Naive thymus-derived CD4-positive, alpha-beta T cell (primary cell): ENCODE measurements at regions of chr7 and their contacts with region 1.

Region 1: DNA sequence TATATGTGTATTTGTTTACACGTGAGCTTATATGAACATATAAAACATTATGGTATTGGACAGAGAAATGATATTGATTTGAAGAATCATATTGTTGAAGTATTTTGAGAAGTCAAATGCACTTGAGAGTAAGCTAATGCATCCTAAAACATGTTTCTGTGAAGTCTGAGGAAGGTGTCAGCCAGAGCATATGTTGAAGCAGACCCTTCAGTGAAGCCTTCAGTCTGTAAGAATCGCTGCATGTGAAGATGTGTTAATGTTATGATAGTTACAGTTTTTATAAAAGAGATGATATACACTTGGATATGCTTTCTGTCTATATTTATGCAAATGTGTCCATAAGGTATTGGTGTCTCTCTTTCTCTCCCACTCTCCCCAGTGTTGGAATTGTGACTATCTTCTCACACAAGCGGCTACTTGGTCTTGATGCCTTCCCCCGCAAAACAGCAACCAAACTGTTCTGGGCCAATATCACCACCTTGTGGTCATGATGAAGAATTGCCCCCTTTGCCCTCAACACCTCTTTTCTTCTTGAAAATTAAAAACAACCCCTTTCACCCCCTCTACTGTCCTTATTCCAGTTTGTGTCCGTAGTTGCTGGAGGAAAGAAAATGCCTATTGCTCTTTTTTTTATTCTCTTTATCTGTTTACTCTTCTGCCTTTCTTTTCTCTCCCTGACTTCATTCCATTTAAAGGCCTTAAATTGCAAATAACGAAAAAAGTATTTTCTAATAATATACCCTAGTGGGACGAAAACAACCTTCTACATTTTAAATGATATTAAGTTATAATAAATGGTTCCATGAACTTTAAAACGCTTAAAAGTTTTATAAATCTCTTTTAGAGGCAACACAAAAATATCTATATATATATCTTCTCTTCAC is 64.9 kb downstream of the IKZF1 start:
- DNase-seq: peak in 7 of 9 donors; percentile 72 to 86 (median 81)
- ATAC-seq: peak; percentile 84
- H3K4me3 ChIP-seq: peak overlapping the region; percentile 15
- H3K4me3 Mint-ChIP-seq: peak overlapping the region; percentile 8 to 89 (median 60)
- H3K27ac ChIP-seq: peak overlapping the region; percentile 94
- H3K27ac Mint-ChIP-seq: peak overlapping the region in 6 of 9 donors; percentile 80 to 100 (median 98)
- H3K4me1 ChIP-seq: peaks cover 84 to 96% of the 10 kb centered on the region in 2 donors
- H3K4me1 Mint-ChIP-seq: peaks cover 63 to 99% (median 96%) of the 10 kb centered on the region in 7 donors
- H3K27me3 ChIP-seq: no peaks in the 10 kb centered on the region
- H3K27me3 Mint-ChIP-seq: no peaks in the 10 kb centered on the region

Region 2: DNA sequence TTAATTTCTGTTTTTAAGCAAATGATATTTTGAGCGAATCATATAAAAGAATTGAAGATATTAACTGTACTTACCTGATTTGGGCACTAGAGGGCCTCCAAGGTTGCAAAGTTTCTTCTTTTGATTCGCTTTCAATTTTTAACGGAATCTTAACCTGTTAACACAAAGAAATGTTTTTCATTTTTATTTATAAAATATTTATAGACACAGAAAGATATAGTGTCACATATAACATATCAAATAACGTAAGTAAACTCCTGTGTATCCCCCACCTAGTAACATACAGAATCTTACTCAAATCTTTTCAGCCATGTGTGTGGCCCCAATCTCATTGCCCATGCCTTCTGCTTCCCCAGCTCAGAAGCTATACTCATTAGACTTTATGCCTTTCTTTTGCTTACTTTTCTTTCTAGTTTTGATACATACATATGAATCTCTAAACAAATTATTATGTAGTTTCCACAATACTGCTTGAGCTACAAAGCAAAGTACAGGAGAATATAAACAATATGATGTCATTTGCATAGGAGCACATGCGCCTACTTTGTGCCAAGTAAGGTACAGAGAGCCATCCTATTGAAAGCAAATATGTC is 226.9 kb before region 1 on chr7:
- CTCF ChIA-PET with region 1: interaction called, 11 read pairs
- POLR2A ChIA-PET with region 1: interaction called, 7 read pairs
- intact Hi-C with region 1: loop called (anchors 1 kb)
- DNase-seq: peak in 7 of 9 donors; percentile 43 to 72 (median 62)
- ATAC-seq: peak; percentile 83
- H3K4me3 ChIP-seq: no peak overlapping the region
- H3K4me3 Mint-ChIP-seq: peak overlapping the region in 9 of 10 donors; percentile 13 to 86 (median 64)
- H3K27ac ChIP-seq: peak overlapping the region; percentile 55
- H3K27ac Mint-ChIP-seq: peak overlapping the region in 8 of 9 donors; percentile 16 to 91 (median 62)
- H3K4me1 ChIP-seq: peaks cover 3% of the 10 kb centered on the region in 2 donors
- H3K4me1 Mint-ChIP-seq: peaks cover 0 to 37% (median 12%) of the 10 kb centered on the region in 7 donors
- H3K27me3 ChIP-seq: no peaks in the 10 kb centered on the region
- H3K27me3 Mint-ChIP-seq: peaks cover 0 to 18% (median 0%) of the 10 kb centered on the region in 5 donors

Region 3: GRCh38 chr7:50190776-50191175 is 178.6 kb before region 1 on chr7:
- CTCF ChIA-PET with region 1: no interaction called
- POLR2A ChIA-PET with region 1: no interaction called
- intact Hi-C with region 1: no loop called
- DNase-seq: no peak
- ATAC-seq: no peak
- H3K4me3 ChIP-seq: no peak overlapping the region
- H3K4me3 Mint-ChIP-seq: no peak overlapping the region
- H3K27ac ChIP-seq: no peak overlapping the region
- H3K27ac Mint-ChIP-seq: no peak overlapping the region
- H3K4me1 ChIP-seq: no peaks in the 10 kb centered on the region
- H3K4me1 Mint-ChIP-seq: peaks cover 0 to 8% (median 0%) of the 10 kb centered on the region in 7 donors
- H3K27me3 ChIP-seq: no peaks in the 10 kb centered on the region
- H3K27me3 Mint-ChIP-seq: peaks cover 0 to 57% (median 0%) of the 10 kb centered on the region in 5 donors

Region 4: GRCh38 chr7:50266635-50267386 is 102.6 kb before region 1 on chr7:
- CTCF ChIA-PET with region 1: interaction called, 12 read pairs
- POLR2A ChIA-PET with region 1: interaction called, 25 read pairs
- intact Hi-C with region 1: loop called in 1 of 2 experiments (anchors 1 kb)
- DNase-seq: peak in 8 of 9 donors; percentile 79 to 86 (median 82)
- ATAC-seq: peak; percentile 87
- H3K4me3 ChIP-seq: peak overlapping the region; percentile 14
- H3K4me3 Mint-ChIP-seq: peak overlapping the region; percentile 69 to 99 (median 82)
- H3K27ac ChIP-seq: peak overlapping the region; percentile 66
- H3K27ac Mint-ChIP-seq: peak overlapping the region; percentile 87 to 99 (median 95)
- H3K4me1 ChIP-seq: peaks cover 87 to 98% of the 10 kb centered on the region in 2 donors
- H3K4me1 Mint-ChIP-seq: peaks cover 83 to 100% (median 98%) of the 10 kb centered on the region in 7 donors
- H3K27me3 ChIP-seq: no peaks in the 10 kb centered on the region
- H3K27me3 Mint-ChIP-seq: no peaks in the 10 kb centered on the region

Region 5: GRCh38 chr7:50324113-50324512 is 45.3 kb before region 1 on chr7:
- CTCF ChIA-PET with region 1: interaction called, 17 read pairs
- POLR2A ChIA-PET with region 1: interaction called, 2,368 read pairs
- intact Hi-C with region 1: no loop called
- DNase-seq: no peak
- ATAC-seq: no peak
- H3K4me3 ChIP-seq: no peak overlapping the region
- H3K4me3 Mint-ChIP-seq: peak overlapping the region in 9 of 10 donors; percentile 14 to 99 (median 64)
- H3K27ac ChIP-seq: peak overlapping the region; percentile 90
- H3K27ac Mint-ChIP-seq: peak overlapping the region in 5 of 9 donors; percentile 6 to 100 (median 97)
- H3K4me1 ChIP-seq: peaks cover 80 to 88% of the 10 kb centered on the region in 2 donors
- H3K4me1 Mint-ChIP-seq: peaks cover 0 to 95% (median 89%) of the 10 kb centered on the region in 7 donors
- H3K27me3 ChIP-seq: no peaks in the 10 kb centered on the region
- H3K27me3 Mint-ChIP-seq: no peaks in the 10 kb centered on the region

Region 6: GRCh38 chr7:50389961-50390360 is 20.6 kb after region 1 on chr7:
- CTCF ChIA-PET with region 1: interaction called, 4 read pairs
- POLR2A ChIA-PET with region 1: interaction called, 15 read pairs
- intact Hi-C with region 1: loop called in 1 of 2 experiments (anchors 2 kb)
- DNase-seq: no peak
- ATAC-seq: no peak
- H3K4me3 ChIP-seq: no peak overlapping the region
- H3K4me3 Mint-ChIP-seq: peak overlapping the region in 6 of 10 donors; percentile 5 to 76 (median 44)
- H3K27ac ChIP-seq: peak overlapping the region; percentile 60
- H3K27ac Mint-ChIP-seq: peak overlapping the region; percentile 80 to 98 (median 95)
- H3K4me1 ChIP-seq: peaks cover 51 to 78% of the 10 kb centered on the region in 2 donors
- H3K4me1 Mint-ChIP-seq: peaks cover 53 to 96% (median 91%) of the 10 kb centered on the region in 7 donors
- H3K27me3 ChIP-seq: no peaks in the 10 kb centered on the region
- H3K27me3 Mint-ChIP-seq: no peaks in the 10 kb centered on the region